ENCODE measurements at regions of chr2 and their contacts with region 1.

Region 1: DNA sequence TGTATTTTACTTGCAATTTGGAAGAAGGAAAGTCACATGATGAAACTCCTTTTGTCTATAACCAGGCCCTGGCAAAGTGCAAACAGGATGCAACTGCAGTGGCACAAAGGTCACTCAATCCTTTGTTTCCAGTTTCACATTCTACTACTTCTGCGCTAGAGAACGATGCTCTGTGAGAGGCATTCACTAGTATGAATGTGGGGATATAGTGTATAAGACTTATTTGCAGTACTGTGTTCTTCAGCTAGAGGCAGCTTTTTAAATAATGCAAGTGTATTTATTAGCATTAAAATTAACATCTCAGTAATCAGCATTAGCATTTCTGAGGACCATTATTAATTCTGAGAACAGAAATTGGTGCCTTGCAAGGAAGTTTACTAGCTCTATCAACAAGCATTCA is 68.9 kb downstream of the PRPF40A start:
- DNase-seq: no peak

Region 2: GRCh38 chr2:152729844-152730243 is 81.5 kb after region 1 on chr2:
- intact Hi-C with region 1: loop called (anchors 10 kb)
- DNase-seq: no peak

Region 3: GRCh38 chr2:152762202-152762601 is 113.9 kb after region 1 on chr2:
- intact Hi-C with region 1: no loop called
- DNase-seq: no peak

Measured in head of caudate nucleus (tissue), 42 donors.